HEK293T (cell line): ENCODE measurements at regions of chr2 and their contacts with region 1.

Region 1: GRCh38 chr2:237512774-237513466 is 25.9 kb downstream of the MLPH start:
- DNase-seq: peak; percentile 83

Region 2: DNA sequence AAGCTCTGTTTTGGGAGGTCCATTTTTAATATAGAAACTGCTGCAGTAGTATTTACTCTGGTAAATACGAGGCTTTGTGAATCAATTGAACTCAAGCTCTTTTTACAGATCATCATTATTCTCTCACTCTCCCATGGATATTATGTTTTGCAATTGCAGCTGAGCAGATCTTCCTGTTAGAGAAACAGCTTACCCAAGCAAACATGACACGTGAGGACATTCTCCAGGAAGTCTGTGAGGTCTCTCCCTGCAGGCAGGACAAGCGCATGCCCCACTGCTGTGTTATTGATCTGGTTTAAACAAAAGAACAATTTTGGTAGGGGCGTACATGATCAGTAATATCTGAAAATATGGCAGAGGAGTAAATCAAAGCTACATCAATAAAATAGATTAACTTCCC is 171.0 kb before region 1 on chr2:
- CTCF ChIA-PET with region 1: no interaction called
- POLR2A ChIA-PET with region 1: no interaction called
- DNase-seq: no peak

Region 3: GRCh38 chr2:237572021-237572741 is 59.3 kb after region 1 on chr2:
- CTCF ChIA-PET with region 1: interaction called, 63 read pairs
- POLR2A ChIA-PET with region 1: interaction called, 3 read pairs
- DNase-seq: peak; percentile 94